GM12878 (cell line): ENCODE measurements at regions of chr7 and their contacts with region 1.

Region 1: DNA sequence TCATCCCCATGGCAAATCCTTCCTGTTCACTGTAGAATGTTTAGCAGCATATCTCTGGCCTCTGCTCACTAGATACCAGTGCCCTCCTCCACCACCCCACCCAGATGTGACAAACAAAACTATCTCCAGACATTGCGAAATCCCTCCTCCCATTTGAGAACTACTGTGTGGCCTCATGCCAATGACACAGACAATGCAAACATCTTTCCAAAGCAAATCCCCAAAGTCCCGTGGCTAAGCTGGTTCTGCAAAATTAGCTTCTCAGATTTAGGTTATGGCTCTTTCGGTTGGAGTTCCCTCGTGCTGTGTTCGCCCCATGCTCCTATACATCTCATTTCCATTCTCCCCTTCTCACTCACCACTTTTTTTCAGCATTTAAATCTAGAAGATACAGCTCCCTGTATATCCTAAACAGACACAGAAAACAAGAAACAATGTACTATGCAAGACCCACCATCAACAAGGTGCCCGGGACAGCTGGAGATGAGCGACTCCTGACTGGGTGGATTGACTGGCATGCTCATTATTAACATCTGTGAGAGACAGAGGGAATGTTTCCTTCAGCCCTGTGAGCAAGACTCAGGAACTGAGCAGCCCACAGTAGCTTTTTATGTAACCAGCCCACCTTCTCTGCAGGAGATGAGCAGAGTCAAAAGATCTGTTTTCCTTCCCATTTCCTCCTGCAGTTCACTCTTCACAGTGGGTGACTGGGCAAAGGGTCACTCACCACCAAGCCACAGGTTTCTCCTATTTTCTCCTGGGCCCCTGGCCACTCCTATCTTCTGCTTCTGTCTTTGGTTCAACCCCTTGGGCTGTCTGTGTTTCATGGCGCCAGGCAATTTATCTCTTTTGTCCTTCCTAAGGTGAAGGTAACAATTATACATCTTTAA is 225.7 kb upstream of the AOAH start:
- DNase-seq: no peak
- ATAC-seq: no peak; the same call in 2 of the 3 replicates
- H3K4me3 ChIP-seq: peak overlapping the region; percentile 52
- H3K27ac ChIP-seq: peak overlapping the region; percentile 89
- H3K4me1 ChIP-seq: peaks cover 40% of the 10 kb centered on the region
- H3K27me3 ChIP-seq: no peaks in the 10 kb centered on the region
- CTCF ChIP-seq: no peak
- EP300 ChIP-seq: no peak
- POLR2A ChIP-seq: no peak
- RAD21 ChIP-seq: no peak

Region 2: DNA sequence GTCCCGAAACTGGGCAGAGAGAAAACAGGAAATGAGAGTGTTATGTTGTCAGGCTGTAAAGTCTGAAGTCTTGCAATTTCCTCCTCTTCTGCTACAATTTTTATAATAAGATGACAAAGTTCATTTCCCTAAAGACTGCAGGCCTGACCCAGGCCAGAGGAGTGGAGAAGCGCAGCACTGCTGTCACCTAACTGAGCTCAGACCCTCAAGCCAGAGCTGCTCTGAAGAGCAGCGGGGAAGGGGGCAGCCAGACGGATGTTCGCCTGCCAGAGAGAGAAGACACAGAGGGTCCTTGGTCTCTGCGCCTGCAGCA is 213.1 kb before region 1 on chr7:
- CTCF ChIA-PET with region 1: no interaction called
- POLR2A ChIA-PET with region 1: no interaction called
- RAD21 ChIA-PET with region 1: no interaction called
- SMC1A ChIA-PET with region 1: no interaction called
- in situ Hi-C with region 1: no loop called
- intact Hi-C with region 1: loop called (anchors 5 kb)
- DNase-seq: no peak
- ATAC-seq: peak; percentile 95; the same call in 2 of the 3 replicates
- H3K4me3 ChIP-seq: no peak overlapping the region
- H3K27ac ChIP-seq: no peak overlapping the region
- H3K4me1 ChIP-seq: peaks cover 11% of the 10 kb centered on the region
- H3K27me3 ChIP-seq: no peaks in the 10 kb centered on the region
- CTCF ChIP-seq: no peak
- EP300 ChIP-seq: peak in 1 of 2 experiments; percentile 60; a peak in 1 of 4 replicates
- POLR2A ChIP-seq: no peak
- RAD21 ChIP-seq: no peak

Region 3: DNA sequence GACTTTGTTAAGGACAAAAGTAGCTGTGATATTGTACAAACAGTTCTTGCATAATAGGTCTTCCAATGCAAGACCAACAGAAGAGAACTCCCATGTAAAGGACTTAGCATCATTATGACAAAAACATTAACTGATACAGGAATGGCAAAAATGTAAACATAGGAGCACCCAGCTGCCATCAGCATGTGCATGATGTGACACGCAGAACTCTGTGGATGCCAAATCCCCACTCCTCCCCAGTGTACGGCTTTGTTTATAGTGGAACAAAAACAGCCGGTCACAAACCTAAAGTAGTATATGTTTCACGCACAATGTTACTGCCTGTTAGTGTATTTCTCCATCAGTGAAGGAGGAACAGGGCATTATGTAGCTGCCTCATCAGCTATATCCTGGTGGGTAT is 90.4 kb after region 1 on chr7:
- CTCF ChIA-PET with region 1: no interaction called
- POLR2A ChIA-PET with region 1: no interaction called
- RAD21 ChIA-PET with region 1: no interaction called
- SMC1A ChIA-PET with region 1: no interaction called
- in situ Hi-C with region 1: no loop called
- intact Hi-C with region 1: no loop called
- DNase-seq: no peak
- ATAC-seq: no peak
- H3K4me3 ChIP-seq: no peak overlapping the region
- H3K27ac ChIP-seq: no peak overlapping the region
- H3K4me1 ChIP-seq: no peaks in the 10 kb centered on the region
- H3K27me3 ChIP-seq: no peaks in the 10 kb centered on the region
- CTCF ChIP-seq: no peak
- EP300 ChIP-seq: no peak
- POLR2A ChIP-seq: no peak
- RAD21 ChIP-seq: no peak

Region 4: DNA sequence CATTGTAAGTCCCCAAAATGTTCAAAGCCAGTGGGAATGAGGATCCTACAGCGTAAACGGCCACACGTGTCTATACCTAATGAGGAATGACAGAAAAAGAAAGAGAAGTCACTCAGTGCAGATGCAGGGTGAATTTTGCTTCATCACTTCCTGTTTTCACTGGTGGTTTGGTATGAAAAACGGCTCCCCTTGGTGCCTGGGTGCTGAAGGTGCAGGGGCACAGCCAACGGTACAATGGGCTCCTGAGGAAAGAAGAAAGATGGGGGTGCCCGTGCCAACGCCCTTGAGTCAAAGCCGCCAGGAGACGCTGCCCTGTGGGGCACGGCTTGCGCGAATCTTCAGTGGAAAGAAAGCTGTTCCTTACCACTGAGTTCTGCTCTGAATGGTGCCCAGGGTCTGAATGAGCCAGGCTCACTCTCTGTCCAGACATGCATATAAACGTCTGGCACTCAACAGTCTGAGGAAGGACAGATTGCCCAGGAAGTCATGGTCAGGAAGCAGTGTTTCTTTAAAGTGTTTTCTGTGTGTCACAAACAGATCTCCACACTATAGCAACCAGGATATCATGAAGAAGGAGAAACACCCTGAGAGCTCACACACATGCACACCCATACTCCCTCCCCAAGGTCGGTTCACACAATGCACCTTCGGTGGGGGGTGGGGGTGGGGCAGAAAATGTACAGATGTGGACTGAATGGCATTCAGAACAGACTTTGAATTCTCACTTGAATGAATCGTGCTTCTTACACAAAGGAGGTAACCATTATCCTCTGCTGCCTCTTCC is 392.9 kb after region 1 on chr7:
- CTCF ChIA-PET with region 1: no interaction called
- POLR2A ChIA-PET with region 1: no interaction called
- RAD21 ChIA-PET with region 1: no interaction called
- SMC1A ChIA-PET with region 1: no interaction called
- in situ Hi-C with region 1: loop called (anchors 10 kb)
- intact Hi-C with region 1: no loop called
- DNase-seq: peak; percentile 69
- ATAC-seq: peak; percentile 70
- H3K4me3 ChIP-seq: peak overlapping the region; percentile 69
- H3K27ac ChIP-seq: peak overlapping the region; percentile 85
- H3K4me1 ChIP-seq: peaks cover 31% of the 10 kb centered on the region
- H3K27me3 ChIP-seq: no peaks in the 10 kb centered on the region
- CTCF ChIP-seq: peak; percentile 19 to 58 (median 41); a peak in 5 of 6 replicates
- EP300 ChIP-seq: no peak
- POLR2A ChIP-seq: peak; percentile 58; the same call in 1 of the 2 replicates
- RAD21 ChIP-seq: peak; percentile 57